Lower leg skin (tissue), 4 donors: ENCODE measurements at regions of chr6 and their contacts with region 1.

Region 1: GRCh38 chr6:31366693-31367470 is 9.9 kb upstream of the HLA-B start:
- DNase-seq: peak; percentile 75 to 96
- H3K4me3 ChIP-seq: no peak overlapping the region
- CTCF ChIP-seq: peak in 1 of 3 donors; percentile 97
- POLR2A ChIP-seq: no peak

Region 2: GRCh38 chr6:31197559-31198305 is 169.2 kb before region 1 on chr6:
- intact Hi-C with region 1: loop called (anchors 5 kb)
- DNase-seq: peak; percentile 92 to 98
- H3K4me3 ChIP-seq: peak overlapping the region; percentile 62
- CTCF ChIP-seq: no peak
- POLR2A ChIP-seq: peak in 1 of 2 donors; percentile 30

Region 3: GRCh38 chr6:31332637-31333602 is 34.0 kb before region 1 on chr6:
- intact Hi-C with region 1: no loop called
- DNase-seq: no peak
- H3K4me3 ChIP-seq: no peak overlapping the region
- CTCF ChIP-seq: no peak
- POLR2A ChIP-seq: no peak

Region 4: DNA sequence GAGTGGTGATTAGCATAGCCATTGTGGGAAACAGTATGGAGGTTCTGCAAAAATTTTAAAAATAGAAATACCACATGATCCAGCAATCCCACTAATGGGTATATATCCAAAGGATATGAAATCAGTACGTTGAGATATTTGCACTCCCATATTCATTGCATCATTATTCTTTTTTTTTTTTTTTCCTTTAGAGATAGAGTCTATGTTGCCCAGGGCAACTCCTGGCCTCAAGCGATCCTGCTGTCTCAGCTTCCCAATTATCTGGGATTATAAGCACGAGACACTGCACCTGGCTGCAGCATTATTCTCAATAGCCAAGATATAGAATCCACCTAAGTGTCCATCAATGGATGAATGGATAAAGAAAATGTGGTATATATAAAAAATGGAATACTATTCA is 155.0 kb after region 1 on chr6:
- intact Hi-C with region 1: no loop called
- DNase-seq: no peak
- H3K4me3 ChIP-seq: no peak overlapping the region
- CTCF ChIP-seq: no peak
- POLR2A ChIP-seq: no peak

Region 5: GRCh38 chr6:31952140-31952805 is 585.4 kb after region 1 on chr6:
- intact Hi-C with region 1: no loop called
- DNase-seq: no peak
- H3K4me3 ChIP-seq: no peak overlapping the region
- CTCF ChIP-seq: no peak
- POLR2A ChIP-seq: no peak